ENCODE measurements at regions of chr1 and their contacts with region 1.

Region 1: GRCh38 chr1:68232354-68233148 is at the start of gene WLS:
- DNase-seq: no peak
- H3K4me3 ChIP-seq: peak within 1 kb of the TSS; percentile 81
- CTCF ChIP-seq: peak; percentile 9

Region 2: GRCh38 chr1:68081775-68082283 is 150.7 kb before region 1 on chr1:
- CTCF ChIA-PET with region 1: no interaction called
- POLR2A ChIA-PET with region 1: no interaction called
- DNase-seq: no peak
- H3K4me3 ChIP-seq: no peak overlapping the region
- CTCF ChIP-seq: no peak

Region 3: DNA sequence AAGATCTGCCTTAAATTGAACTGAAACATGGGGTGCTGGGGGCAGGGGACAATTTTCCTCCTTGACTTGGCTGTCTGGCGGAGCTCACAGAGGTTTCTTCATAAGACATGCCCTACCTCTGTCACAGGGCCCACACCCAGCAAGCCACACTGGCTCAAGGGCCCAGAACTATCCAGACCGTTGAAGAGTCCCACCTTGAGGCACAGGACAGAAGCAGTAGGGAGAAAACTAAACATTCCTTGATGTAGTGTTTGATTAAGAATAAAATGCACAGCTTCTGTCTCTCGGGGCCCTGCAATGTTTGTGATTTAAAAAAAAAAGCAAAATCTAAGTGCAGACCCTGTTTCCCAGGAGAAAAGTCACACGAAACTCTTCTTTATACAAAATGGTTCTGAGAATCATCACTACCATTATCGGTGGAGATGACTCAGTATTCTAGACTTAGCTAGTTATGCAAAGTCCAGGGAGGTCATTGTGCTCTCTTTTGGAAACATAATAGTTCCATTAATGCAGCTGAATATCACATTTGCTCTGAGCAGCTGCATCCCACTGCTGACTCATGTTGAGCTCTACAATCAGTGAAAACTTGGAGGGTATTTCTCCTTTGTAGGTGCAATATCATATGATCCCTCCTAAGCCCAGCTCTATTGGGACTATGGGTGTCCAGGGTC is 128.5 kb before region 1 on chr1:
- CTCF ChIA-PET with region 1: no interaction called
- POLR2A ChIA-PET with region 1: no interaction called
- DNase-seq: no peak
- H3K4me3 ChIP-seq: no peak overlapping the region
- CTCF ChIP-seq: no peak

Region 4: GRCh38 chr1:68173911-68174737 is 58.4 kb before region 1 on chr1:
- CTCF ChIA-PET with region 1: interaction called, 3 read pairs
- POLR2A ChIA-PET with region 1: interaction called, 12 read pairs
- DNase-seq: peak; percentile 88
- H3K4me3 ChIP-seq: no peak overlapping the region; the same call in 1 of the 2 replicates
- CTCF ChIP-seq: no peak

Region 5: DNA sequence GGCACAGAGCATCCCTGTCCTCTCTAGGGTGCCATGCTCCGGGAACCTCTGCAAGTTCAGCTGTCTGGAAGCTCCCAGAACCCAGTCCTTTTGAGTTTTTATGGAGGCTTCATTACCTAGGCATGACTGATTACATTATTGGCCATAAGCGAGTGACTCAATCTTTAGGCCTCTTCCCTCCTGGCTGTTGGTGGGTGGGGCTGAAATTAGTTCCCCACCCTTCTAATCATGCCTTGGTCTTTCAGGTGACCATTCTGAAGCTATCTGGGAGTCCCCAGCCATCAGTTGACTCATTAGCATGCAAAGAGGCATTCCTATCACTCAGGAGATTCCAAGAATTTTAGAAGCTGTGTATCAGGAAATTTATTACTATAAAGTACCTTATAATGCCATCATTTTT is 46.8 kb before region 1 on chr1:
- CTCF ChIA-PET with region 1: no interaction called
- POLR2A ChIA-PET with region 1: no interaction called
- DNase-seq: no peak
- H3K4me3 ChIP-seq: no peak overlapping the region
- CTCF ChIP-seq: no peak

Region 6: GRCh38 chr1:68221621-68222373 is 10.8 kb before region 1 on chr1:
- CTCF ChIA-PET with region 1: interaction called, 16 read pairs
- POLR2A ChIA-PET with region 1: no interaction called
- DNase-seq: no peak
- H3K4me3 ChIP-seq: no peak overlapping the region
- CTCF ChIP-seq: no peak

Region 7: DNA sequence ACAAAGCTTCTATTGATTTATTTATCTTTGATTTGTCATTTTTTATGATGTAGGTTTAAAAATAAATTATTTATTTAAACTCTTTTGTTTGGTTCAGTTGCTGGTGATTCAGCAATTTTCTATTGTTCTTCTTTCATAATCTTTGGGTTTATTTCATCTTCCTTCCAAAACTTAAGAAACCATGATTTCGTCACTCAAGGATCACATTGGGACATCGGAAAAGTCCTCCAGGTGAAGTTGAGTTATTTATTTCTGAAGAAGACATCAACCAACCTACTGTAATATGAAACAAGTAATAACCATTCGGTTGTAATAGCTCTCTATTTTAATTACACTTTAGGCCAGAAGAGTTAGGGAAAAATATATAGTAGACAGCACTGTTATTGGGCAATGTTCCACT is 22.8 kb after region 1 on chr1:
- CTCF ChIA-PET with region 1: no interaction called
- POLR2A ChIA-PET with region 1: no interaction called
- DNase-seq: no peak
- H3K4me3 ChIP-seq: no peak overlapping the region
- CTCF ChIP-seq: no peak

Region 8: GRCh38 chr1:68340951-68341350 is 108.4 kb after region 1 on chr1:
- CTCF ChIA-PET with region 1: interaction called, 11 read pairs
- POLR2A ChIA-PET with region 1: no interaction called
- DNase-seq: no peak
- H3K4me3 ChIP-seq: no peak overlapping the region
- CTCF ChIP-seq: no peak